Heart right ventricle (tissue), 16 donors: ENCODE measurements at regions of chr5 and their contacts with region 1.

Region 1: DNA sequence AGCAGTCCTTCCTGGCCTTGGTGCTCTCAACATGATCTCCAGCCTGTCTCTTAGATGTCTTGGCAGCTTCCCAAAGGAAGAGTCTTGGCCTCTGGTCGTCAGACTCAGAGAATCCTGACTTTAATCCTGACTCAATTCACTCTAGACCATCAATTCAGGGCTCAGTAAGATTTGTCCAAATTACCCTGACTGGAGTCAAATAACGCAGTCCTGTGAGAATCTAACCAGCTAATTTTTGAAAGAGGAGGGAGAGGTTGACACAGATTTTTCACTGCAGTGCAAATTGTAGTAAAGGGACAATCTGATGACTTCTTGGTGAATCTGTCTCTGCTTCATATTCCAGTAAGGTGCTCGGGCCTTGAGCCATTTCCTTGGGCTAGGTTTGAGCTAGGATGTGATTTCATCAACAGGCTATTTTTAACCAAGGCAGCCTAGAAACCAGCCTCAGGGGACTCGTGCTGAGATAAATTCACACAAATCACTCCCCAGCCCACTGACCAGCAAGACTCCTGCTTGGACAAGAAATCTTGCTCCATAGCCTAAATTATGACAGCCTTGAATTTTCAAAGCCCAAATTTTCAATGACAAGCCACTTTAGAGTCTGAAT is 257.4 kb downstream of the ENC1 start:
- DNase-seq: peak in 1 of 2 donors; percentile 80
- ATAC-seq: peak; percentile 70 to 93 (median 87)
- H3K4me3 ChIP-seq: no peak overlapping the region
- H3K27ac ChIP-seq: peak overlapping the region; percentile 42 to 85 (median 70)
- H3K4me1 ChIP-seq: peaks cover 0 to 71% (median 45%) of the 10 kb centered on the region in 9 donors
- H3K27me3 ChIP-seq: no peaks in the 10 kb centered on the region
- CTCF ChIP-seq: no peak

Region 2: DNA sequence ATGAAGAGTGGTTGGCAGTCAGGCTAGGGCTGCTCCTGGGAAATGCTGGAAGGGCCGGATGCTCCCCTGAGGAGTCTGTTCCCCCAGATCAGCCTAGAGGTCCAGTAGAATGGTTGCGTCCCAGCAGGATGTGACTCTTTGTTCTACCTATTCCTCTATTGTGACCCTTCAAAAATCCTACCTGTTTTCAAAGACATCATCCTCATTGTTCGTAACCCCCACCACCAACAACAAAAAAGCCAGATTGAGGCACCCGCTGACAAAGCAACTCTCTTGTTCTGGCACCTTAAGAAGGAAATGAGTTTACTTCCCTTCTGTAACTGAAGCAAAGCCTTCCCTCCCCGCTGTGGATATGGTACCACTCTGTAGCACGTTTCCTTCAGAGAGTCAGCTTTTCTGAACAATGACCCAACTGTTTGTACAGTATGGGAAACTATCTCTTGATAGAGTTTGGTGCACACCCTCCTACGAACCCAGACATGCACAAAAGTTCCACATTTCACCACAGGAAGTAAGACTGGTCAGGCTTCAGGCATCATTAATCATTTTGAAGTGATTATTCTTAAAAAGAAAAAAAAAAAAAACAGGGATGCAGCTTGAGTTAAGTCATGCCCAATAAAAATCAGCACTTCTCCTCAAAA is 50.3 kb after region 1 on chr5:
- intact Hi-C with region 1: loop called in 2 of 10 experiments (anchors 5 kb)
- DNase-seq: no peak
- ATAC-seq: peak; percentile 58 to 85 (median 76)
- H3K4me3 ChIP-seq: peak overlapping the region in 5 of 10 donors; percentile 1 to 29 (median 7)
- H3K27ac ChIP-seq: peak overlapping the region in 9 of 10 donors; percentile 5 to 75 (median 63)
- H3K4me1 ChIP-seq: peaks cover 3 to 36% (median 22%) of the 10 kb centered on the region in 9 donors
- H3K27me3 ChIP-seq: no peaks in the 10 kb centered on the region
- CTCF ChIP-seq: no peak

Region 3: DNA sequence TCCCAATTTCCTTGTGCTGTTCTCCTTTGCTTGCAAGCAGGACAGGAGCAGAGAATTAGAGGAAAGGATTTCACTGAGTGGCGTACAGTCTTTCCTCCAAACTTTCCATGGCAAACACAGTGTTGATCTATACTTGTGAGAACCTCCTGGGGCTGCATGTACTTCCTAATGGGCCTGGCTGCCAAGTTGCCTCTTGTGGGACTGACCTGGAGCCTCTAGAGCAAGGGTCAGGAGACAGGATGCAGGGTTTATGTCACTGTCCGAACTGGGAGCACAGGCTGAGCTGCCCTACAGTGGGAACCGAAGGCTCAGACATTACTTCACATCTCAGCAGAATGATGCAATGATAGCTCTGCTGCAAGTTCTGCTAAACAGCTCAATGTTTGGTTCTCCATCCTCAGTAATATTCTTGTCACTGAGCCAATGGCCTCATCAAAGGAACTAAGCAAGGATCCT is 155.1 kb after region 1 on chr5:
- intact Hi-C with region 1: loop called in 1 of 10 experiments (anchors 10 kb)
- DNase-seq: peak; percentile 61 to 80
- ATAC-seq: peak; percentile 92 to 98 (median 97)
- H3K4me3 ChIP-seq: no peak overlapping the region
- H3K27ac ChIP-seq: peak overlapping the region in 8 of 10 donors; percentile 2 to 81 (median 41)
- H3K4me1 ChIP-seq: peaks cover 3 to 46% (median 25%) of the 10 kb centered on the region in 9 donors
- H3K27me3 ChIP-seq: no peaks in the 10 kb centered on the region
- CTCF ChIP-seq: no peak

Region 4: GRCh38 chr5:74576941-74577456 is 193.9 kb after region 1 on chr5:
- intact Hi-C with region 1: no loop called
- DNase-seq: peak in 1 of 2 donors; percentile 28
- ATAC-seq: peak in 7 of 8 donors; percentile 76 to 95 (median 89)
- H3K4me3 ChIP-seq: peak overlapping the region in 5 of 10 donors; percentile 8 to 21 (median 12)
- H3K27ac ChIP-seq: peak overlapping the region in 9 of 10 donors; percentile 54 to 87 (median 74)
- H3K4me1 ChIP-seq: peaks cover 0 to 26% (median 16%) of the 10 kb centered on the region in 9 donors
- H3K27me3 ChIP-seq: no peaks in the 10 kb centered on the region
- CTCF ChIP-seq: no peak